ENCODE measurements at regions of chr12 and their contacts with region 1.

Region 1: DNA sequence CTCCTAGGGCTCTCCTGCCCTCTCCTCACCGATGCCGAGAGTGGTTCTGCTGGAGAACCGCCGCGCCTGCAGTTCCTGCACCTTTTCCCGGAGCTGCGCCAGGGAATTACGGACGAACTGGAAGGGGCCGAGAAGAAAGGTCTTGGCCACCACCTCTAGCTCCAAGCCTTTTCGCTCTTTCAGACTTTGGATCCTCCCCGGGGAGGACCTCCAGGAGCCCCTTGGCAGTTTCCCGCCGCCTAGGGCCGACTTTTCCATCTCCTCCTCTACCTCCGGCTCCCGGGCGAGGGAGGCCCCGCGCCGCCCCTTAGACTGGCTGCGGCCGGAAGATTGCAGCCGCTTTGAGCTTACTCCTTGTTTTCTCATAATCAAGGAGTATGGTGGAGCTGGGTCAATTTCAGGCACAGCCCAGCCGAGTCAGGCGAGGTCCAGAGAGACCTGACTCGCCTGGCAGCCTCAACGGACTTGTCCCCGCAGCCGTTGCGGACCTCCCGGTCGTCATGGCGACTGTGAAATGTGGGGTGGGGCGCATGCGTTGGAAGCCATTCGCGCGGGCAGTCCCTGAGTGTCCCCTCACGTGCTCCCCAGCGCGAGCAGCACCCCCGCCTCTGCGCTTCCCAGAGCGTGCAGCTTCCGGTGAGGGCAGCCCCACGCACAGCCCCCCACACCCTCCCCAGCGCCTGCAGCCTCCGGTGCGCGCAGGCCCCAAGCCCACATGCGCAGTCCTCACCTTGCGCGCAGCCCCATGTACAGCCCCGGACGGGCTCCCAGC is at the start of gene DPY19L2:
- DNase-seq: peak; percentile 47
- H3K4me3 ChIP-seq: peak within 1 kb of the TSS; percentile 39 to 49 (median 48)
- H3K27ac ChIP-seq: no peak within 1 kb of the TSS
- H3K4me1 ChIP-seq: no peaks in the 10 kb centered on the region
- H3K27me3 ChIP-seq: peaks cover 4 to 8% of the 10 kb centered on the region in 2 experiments
- CTCF ChIP-seq: no peak
- POLR2A ChIP-seq: no peak
- total RNA-seq, gene DPY19L2: 1.6 and 2.3 TPM in 2 replicates

Region 2: DNA sequence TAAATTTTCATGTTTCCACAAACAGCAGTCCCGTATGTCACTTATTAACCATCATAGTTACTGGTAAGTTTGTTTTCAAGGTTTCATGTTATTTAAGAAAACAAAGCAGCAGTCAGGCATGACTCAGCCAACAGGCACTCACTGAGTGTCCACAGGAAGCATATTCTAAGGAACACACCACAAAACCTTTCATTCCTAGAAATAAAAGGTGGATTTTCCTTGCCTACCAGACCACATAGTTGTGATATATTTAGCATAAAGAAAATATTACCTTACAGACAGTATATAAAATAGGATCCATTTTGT is 373.9 kb before region 1 on chr12:
- CTCF ChIA-PET with region 1: no interaction called
- POLR2A ChIA-PET with region 1: no interaction called
- dilution Hi-C with region 1: no loop called
- intact Hi-C with region 1: loop called (anchors 5 kb)
- DNase-seq: peak; percentile 92
- H3K4me3 ChIP-seq: no peak overlapping the region
- H3K27ac ChIP-seq: peak overlapping the region; percentile 93
- H3K4me1 ChIP-seq: peaks cover 22% of the 10 kb centered on the region
- H3K27me3 ChIP-seq: peaks cover 0 to 3% of the 10 kb centered on the region in 2 experiments
- CTCF ChIP-seq: no peak
- POLR2A ChIP-seq: no peak

Region 3: DNA sequence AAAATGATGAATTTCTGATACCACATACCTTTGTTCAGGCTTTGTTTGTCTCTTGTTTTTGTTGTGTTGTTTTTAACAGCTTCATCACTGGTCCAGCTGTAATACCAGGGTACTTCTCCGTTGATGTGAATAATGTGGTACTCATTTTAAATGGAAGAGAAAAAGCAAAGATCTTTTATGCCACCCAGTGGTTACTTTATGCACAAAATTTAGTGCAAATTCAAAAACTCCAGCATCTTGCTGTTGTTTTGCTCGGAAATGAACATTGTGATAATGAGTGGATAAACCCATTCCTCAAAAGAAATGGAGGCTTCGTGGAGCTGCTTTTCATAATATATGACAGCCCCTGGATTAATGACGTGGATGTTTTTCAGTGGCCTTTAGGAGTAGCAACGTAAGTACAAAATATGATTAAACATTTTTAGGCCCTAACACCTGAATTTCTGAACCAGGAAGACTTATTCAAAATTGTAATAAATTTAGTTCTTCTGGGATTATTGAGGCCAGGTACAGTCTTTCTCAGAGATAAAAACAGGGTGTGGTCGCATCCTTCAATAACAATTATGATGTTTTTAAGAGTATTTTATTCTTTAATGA is 133.9 kb after region 1 on chr12:
- CTCF ChIA-PET with region 1: interaction called, 11 read pairs
- POLR2A ChIA-PET with region 1: no interaction called
- dilution Hi-C with region 1: no loop called
- intact Hi-C with region 1: loop called (anchors 5 kb)
- DNase-seq: peak; percentile 43
- H3K4me3 ChIP-seq: no peak overlapping the region
- H3K27ac ChIP-seq: no peak overlapping the region
- H3K4me1 ChIP-seq: no peaks in the 10 kb centered on the region
- H3K27me3 ChIP-seq: no peaks in the 10 kb centered on the region
- CTCF ChIP-seq: peak; percentile 31
- POLR2A ChIP-seq: no peak

Region 4: DNA sequence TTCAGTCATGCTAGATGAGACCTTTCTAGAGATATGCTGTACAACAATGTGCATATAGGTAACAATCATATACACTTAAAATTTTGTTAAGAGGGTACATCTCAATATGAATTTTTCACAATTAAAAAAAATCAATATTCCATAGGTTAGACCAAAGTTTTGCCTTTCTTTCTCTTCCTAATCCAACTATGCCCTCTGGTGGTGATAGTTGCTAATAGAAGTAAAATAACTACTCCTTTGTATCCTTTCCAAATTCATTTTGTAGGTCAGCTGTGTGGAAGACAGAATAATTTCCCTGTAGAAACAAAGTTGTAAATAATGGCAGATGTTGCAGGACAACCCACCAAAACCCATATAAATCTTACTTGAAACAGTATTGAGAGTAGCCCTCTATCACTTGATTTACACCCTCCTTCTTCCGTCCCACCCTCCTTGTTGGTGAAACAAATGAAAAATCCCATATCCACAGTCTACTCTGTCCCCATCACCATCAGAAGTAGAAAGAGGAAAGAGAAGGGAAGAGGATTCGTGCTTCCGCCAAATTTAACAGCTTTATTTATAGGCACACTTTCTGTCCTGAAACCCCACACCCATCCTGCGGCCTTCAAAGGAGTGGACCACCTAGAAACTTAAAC is 588.1 kb after region 1 on chr12:
- CTCF ChIA-PET with region 1: no interaction called
- POLR2A ChIA-PET with region 1: no interaction called
- dilution Hi-C with region 1: no loop called
- intact Hi-C with region 1: loop called (anchors 5 kb)
- DNase-seq: peak; percentile 61
- H3K4me3 ChIP-seq: no peak overlapping the region
- H3K27ac ChIP-seq: no peak overlapping the region
- H3K4me1 ChIP-seq: no peaks in the 10 kb centered on the region
- H3K27me3 ChIP-seq: no peaks in the 10 kb centered on the region
- CTCF ChIP-seq: peak; percentile 25 to 27
- POLR2A ChIP-seq: no peak

Region 5: DNA sequence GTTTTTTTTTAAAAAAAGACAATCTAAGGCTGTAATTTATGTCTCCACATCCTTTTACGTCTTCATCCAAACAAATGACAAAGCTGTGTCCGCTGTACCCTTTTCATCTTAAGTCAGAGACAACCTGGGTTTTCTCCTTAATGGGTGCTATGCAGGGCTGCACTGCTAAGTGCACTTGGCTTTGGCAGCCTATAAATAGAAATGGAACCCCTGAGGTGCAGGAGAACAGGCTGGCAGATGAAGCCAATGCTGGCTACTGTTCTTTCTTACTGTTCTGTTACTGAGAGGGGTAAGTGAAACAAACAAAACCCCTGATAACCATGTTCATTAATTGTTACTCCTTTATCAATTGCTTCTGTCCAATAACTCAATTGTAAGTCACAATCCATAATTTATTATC is 601.0 kb after region 1 on chr12:
- CTCF ChIA-PET with region 1: no interaction called
- POLR2A ChIA-PET with region 1: no interaction called
- dilution Hi-C with region 1: no loop called
- intact Hi-C with region 1: no loop called
- DNase-seq: no peak
- H3K4me3 ChIP-seq: no peak overlapping the region
- H3K27ac ChIP-seq: no peak overlapping the region
- H3K4me1 ChIP-seq: no peaks in the 10 kb centered on the region
- H3K27me3 ChIP-seq: peaks cover 0 to 2% of the 10 kb centered on the region in 2 experiments
- CTCF ChIP-seq: no peak
- POLR2A ChIP-seq: no peak

Measured in endothelial cell of umbilical vein (primary cell).